ENCODE measurements at regions of chr15 and their contacts with region 1.

Region 1: GRCh38 chr15:43225201-43225949 is 4.6 kb upstream of the EPB42 start:
- DNase-seq: peak; percentile 45
- ATAC-seq: peak; percentile 99
- H3K4me3 ChIP-seq: no peak overlapping the region
- H3K27ac ChIP-seq: no peak overlapping the region
- H3K4me1 ChIP-seq: no peaks in the 10 kb centered on the region
- H3K27me3 ChIP-seq: no peaks in the 10 kb centered on the region
- CTCF ChIP-seq: peak; percentile 73 to 89 (median 76)
- EP300 ChIP-seq: no peak
- POLR2A ChIP-seq: no peak
- RAD21 ChIP-seq: peak; percentile 99

Region 2: DNA sequence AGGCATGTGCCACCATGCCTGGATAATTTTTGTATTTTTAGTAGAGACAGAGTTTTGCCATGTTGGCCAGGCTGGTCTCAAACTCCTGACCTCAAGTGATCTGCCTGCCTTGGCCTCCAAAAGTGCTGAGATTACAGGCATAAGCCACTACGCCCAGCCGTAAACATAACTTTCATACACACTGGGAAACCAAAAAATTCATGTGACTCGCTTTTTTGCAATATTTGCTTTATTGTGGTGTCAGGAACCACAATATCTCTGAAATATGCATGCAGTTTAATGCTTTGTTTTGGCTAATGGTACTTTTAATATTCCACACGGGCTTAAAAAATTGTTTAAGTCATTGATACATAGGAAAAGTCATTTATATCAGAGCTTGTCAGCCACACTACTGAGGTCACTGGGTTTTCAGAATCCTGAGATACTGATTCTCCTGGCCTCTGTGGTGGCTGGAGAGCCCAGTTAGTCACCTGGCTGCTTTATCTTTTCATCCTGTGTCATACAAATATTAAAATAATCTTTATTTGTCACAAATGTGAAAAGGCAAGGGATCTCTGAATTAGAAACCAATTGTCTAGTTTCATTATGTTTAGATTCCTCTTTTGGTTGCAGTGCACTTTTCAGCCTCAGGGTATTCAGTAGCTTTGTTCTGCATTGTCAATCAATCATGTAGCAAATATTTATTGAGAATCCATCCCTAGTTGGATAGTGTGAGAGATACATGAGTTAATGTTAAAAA is 82.0 kb before region 1 on chr15:
- CTCF ChIA-PET with region 1: no interaction called
- POLR2A ChIA-PET with region 1: no interaction called
- RAD21 ChIA-PET with region 1: no interaction called
- SMC1A ChIA-PET with region 1: no interaction called
- in situ Hi-C with region 1: no loop called
- intact Hi-C with region 1: no loop called
- DNase-seq: no peak
- ATAC-seq: peak; percentile 87
- H3K4me3 ChIP-seq: no peak overlapping the region
- H3K27ac ChIP-seq: no peak overlapping the region; the same call in 1 of the 2 replicates
- H3K4me1 ChIP-seq: peaks cover 17% of the 10 kb centered on the region
- H3K27me3 ChIP-seq: no peaks in the 10 kb centered on the region
- CTCF ChIP-seq: peak in 2 of 3 experiments; percentile 17 to 28; a peak in 2 of 6 replicates
- EP300 ChIP-seq: no peak
- POLR2A ChIP-seq: no peak
- RAD21 ChIP-seq: no peak

Region 3: DNA sequence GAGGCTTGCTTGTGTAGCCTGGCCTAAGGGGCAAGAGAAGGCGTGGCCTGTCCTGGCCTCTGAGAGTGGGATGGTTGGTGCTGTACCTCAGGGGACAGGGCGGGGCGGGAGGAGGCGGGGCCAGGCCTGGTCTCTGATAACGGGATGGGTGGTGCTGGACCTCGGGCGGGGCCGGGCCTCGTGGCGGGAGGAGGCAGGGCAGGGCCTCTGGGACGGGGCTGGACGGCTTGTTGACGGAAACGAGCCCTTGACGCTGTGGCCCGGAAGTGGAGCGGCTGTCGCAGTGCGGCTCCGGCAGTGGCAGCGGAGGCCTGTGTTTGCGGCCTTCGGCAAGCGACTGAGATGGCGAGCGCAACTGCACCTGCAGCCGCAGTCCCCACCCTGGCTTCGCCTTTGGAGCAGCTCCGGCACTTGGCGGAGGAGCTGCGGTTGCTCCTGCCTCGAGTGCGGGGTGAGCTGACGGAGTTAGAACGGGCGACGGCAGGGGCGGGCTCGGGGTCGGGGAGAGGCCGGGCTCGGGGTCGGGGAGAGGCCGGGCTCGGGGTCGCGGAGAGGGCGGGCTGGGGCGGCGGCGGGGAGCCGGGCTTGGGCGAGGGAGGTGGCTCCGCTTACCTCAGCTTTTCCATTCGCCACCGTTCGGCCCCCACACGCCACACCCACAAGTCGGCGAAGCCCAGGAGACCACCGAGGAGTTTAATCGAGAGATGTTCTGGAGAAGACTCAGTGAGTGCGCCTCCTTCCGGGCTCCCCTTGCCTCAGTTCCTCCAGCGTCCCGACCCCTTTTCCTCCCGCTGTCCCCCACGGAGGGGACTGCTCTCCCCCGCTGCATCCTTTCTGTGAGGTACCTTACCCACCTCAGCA is 40.0 kb before region 1 on chr15 and contains the start of gene CCNDBP1:
- CTCF ChIA-PET with region 1: interaction called, 21 read pairs
- POLR2A ChIA-PET with region 1: interaction called, 3 read pairs
- RAD21 ChIA-PET with region 1: interaction called, 4 read pairs
- SMC1A ChIA-PET with region 1: interaction called, 7 read pairs
- in situ Hi-C with region 1: no loop called
- intact Hi-C with region 1: loop called (anchors 2 kb)
- DNase-seq: peak; percentile 87
- ATAC-seq: peak; percentile 98
- H3K4me3 ChIP-seq: peak within 1 kb of the TSS; percentile 100
- H3K27ac ChIP-seq: peak within 1 kb of the TSS; percentile 80
- H3K4me1 ChIP-seq: no peaks in the 10 kb centered on the region
- H3K27me3 ChIP-seq: no peaks in the 10 kb centered on the region
- CTCF ChIP-seq: peak; percentile 28 to 32 (median 28); a peak in 5 of 6 replicates
- EP300 ChIP-seq: no peak
- POLR2A ChIP-seq: peak; percentile 98
- RAD21 ChIP-seq: no peak
- polyA plus RNA-seq, gene CCNDBP1: 30.1 to 39.2 TPM

Region 4: GRCh38 chr15:43204016-43204901 is 21.1 kb before region 1 on chr15:
- CTCF ChIA-PET with region 1: interaction called, 18 read pairs
- POLR2A ChIA-PET with region 1: interaction called, 4 read pairs
- RAD21 ChIA-PET with region 1: interaction called, 5 read pairs
- SMC1A ChIA-PET with region 1: interaction called, 5 read pairs
- in situ Hi-C with region 1: no loop called
- intact Hi-C with region 1: no loop called
- DNase-seq: no peak
- ATAC-seq: peak; percentile 93
- H3K4me3 ChIP-seq: no peak overlapping the region
- H3K27ac ChIP-seq: no peak overlapping the region
- H3K4me1 ChIP-seq: no peaks in the 10 kb centered on the region
- H3K27me3 ChIP-seq: peaks cover 0 to 3% of the 10 kb centered on the region in 2 experiments; a peak in 3 of 4 replicates
- CTCF ChIP-seq: peak; percentile 68 to 73 (median 69)
- EP300 ChIP-seq: no peak
- POLR2A ChIP-seq: no peak
- RAD21 ChIP-seq: peak; percentile 45

Region 5: GRCh38 chr15:43253431-43254403 is 28.3 kb after region 1 on chr15:
- CTCF ChIA-PET with region 1: interaction called, 518 read pairs
- POLR2A ChIA-PET with region 1: interaction called, 4 read pairs
- RAD21 ChIA-PET with region 1: interaction called, 76 read pairs
- SMC1A ChIA-PET with region 1: interaction called, 46 read pairs
- in situ Hi-C with region 1: no loop called
- intact Hi-C with region 1: loop called (anchors 1 kb)
- DNase-seq: peak; percentile 89
- ATAC-seq: peak; percentile 72
- H3K4me3 ChIP-seq: no peak overlapping the region
- H3K27ac ChIP-seq: peak overlapping the region; percentile 68
- H3K4me1 ChIP-seq: peaks cover 46% of the 10 kb centered on the region
- H3K27me3 ChIP-seq: no peaks in the 10 kb centered on the region
- CTCF ChIP-seq: no peak
- EP300 ChIP-seq: peak; percentile 8 to 41; a peak in 1 of 4 replicates
- POLR2A ChIP-seq: 0 out of 2 replicates have a peak, but pooled peaks have one; percentile 18
- RAD21 ChIP-seq: no peak

Region 6: DNA sequence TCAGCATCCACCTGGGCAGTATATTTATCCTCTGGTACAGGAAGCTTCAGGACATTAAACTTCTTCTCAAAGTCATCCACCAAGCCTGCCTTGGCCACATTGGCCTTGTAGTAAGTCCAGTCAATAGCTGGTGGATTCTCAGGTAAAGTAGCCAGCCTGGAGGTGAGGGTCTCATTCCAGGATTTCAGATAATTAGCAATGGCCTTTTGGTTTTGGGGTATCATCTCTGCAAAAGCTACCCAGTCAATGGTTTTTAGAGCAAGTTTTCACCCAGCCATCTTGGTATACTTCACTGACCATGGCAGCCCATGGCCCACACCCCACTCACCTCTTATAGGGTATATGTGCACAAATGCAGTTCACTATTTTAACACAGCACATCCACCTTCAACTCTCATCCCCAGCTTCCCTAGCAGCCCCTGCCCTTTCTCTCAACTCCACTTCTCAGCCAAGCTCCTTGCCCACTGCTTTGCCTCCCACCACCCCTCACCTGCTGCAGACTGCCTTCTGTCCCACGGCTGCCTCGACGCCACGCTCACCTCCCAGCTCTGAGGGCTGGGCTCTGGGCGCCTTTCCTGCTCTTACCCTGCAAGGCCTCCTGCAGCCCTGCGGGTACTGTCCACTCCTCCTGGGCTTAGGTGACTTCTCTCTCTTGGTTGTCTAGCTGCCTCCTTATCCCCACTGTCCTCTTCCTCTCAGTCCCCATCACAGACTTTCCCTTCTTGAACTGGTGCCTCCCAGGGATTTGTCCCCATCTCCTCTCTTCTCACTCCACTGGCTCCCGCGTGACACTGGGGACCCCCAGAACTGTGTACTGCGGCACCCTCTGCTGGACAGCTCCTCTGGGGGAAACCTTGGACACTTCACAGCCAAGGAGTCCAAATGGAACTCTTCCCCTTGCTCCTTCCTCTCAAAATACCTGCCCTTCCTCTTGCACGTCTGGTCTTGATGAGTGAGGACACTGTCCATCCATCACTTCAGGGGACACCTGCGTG is 43.0 kb after region 1 on chr15:
- CTCF ChIA-PET with region 1: interaction called, 518 read pairs
- POLR2A ChIA-PET with region 1: interaction called, 8 read pairs
- RAD21 ChIA-PET with region 1: interaction called, 255 read pairs
- SMC1A ChIA-PET with region 1: interaction called, 311 read pairs
- in situ Hi-C with region 1: no loop called
- intact Hi-C with region 1: loop called (anchors 1 kb)
- DNase-seq: no peak
- ATAC-seq: peak; percentile 90
- H3K4me3 ChIP-seq: no peak overlapping the region
- H3K27ac ChIP-seq: no peak overlapping the region
- H3K4me1 ChIP-seq: no peaks in the 10 kb centered on the region
- H3K27me3 ChIP-seq: no peaks in the 10 kb centered on the region
- CTCF ChIP-seq: peak; percentile 32 to 88 (median 64); a peak in 5 of 6 replicates
- EP300 ChIP-seq: no peak
- POLR2A ChIP-seq: no peak
- RAD21 ChIP-seq: peak; percentile 88

Measured in GM12878 (cell line).